Activated naive CD4-positive, alpha-beta T cell treated with anti-CD3 and anti-CD28 coated beads for 36 hours (primary cell): ENCODE measurements at regions of chr4 and their contacts with region 1.

Region 1: DNA sequence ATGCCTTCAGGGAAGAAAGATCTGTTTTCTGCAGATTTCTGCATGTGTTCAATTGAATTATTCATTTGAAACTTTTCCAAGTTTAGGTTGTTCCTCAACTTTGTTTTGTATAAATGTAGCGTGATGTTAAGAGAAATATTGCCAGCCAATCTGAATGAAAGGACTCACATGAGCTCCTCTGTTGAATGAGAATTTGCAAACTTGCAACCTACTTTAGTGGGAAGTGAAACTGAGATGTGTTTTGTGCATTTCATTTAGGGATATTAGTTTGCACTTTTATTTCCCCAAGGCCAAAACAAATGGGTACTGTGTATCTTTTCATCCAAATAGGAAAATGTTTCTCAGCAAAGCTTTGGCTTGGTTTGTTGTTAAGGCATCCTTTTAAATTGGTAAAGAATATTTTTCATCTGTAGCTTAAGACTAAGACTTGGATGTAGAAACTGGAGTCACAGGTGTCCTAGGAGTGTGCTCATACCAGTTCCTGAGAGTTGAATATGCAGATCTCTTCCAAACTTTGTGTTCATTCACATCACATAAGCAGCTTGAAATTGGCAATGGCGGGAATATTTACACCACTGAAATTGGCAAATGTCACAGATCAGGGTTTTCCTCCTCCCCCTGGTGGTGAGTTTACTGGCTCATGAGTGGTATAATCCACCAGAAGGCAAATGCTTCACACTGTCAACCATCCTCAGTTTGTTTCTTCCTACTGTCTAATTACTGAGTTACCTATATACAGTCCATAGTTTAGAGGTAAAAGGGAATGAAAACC is 193.6 kb upstream of the BANK1 start:
- DNase-seq: peak; percentile 33
- H3K4me3 Mint-ChIP-seq: no peak overlapping the region
- H3K27ac Mint-ChIP-seq: no peak overlapping the region
- H3K4me1 Mint-ChIP-seq: no peaks in the 10 kb centered on the region
- H3K27me3 Mint-ChIP-seq: peaks cover 1% of the 10 kb centered on the region

Region 2: GRCh38 chr4:101187841-101188240 is 409.1 kb before region 1 on chr4:
- CTCF ChIA-PET with region 1: no interaction called
- intact Hi-C with region 1: loop called (anchors 1 kb)
- DNase-seq: no peak
- H3K4me3 Mint-ChIP-seq: no peak overlapping the region
- H3K27ac Mint-ChIP-seq: no peak overlapping the region
- H3K4me1 Mint-ChIP-seq: peaks cover 6% of the 10 kb centered on the region
- H3K27me3 Mint-ChIP-seq: no peaks in the 10 kb centered on the region

Region 3: DNA sequence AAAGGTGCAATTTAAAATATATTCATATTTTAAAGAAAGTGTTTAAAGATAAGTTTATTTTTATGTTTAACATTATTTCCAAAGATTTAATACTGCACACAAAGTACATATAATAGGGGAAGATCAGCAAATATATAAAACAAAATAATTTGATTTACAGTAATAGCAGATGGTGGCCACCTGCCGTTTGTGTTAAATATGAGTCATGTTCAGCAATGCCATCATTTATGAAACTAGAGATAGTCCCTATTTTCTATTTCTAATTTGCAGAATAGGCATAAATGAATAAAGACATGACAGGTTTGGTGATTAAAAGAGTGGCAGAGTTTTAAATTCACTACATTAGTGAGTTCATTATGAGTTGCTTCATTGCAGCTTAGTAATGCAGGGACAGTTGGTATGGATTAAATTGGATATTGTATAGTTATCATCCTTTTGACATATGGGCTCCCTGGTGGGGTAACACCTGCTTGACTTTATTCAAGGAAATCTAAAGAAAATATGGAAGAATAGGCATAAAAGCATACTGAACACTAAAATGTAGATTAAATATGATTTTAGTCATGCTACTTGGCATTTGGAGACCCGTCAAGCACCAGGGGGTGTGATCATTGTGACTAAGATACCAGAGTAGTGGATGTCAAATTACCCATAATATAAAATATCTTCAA is 114.8 kb after region 1 on chr4:
- CTCF ChIA-PET with region 1: no interaction called
- intact Hi-C with region 1: no loop called
- DNase-seq: no peak
- H3K4me3 Mint-ChIP-seq: no peak overlapping the region
- H3K27ac Mint-ChIP-seq: no peak overlapping the region
- H3K4me1 Mint-ChIP-seq: no peaks in the 10 kb centered on the region
- H3K27me3 Mint-ChIP-seq: no peaks in the 10 kb centered on the region

Region 4: DNA sequence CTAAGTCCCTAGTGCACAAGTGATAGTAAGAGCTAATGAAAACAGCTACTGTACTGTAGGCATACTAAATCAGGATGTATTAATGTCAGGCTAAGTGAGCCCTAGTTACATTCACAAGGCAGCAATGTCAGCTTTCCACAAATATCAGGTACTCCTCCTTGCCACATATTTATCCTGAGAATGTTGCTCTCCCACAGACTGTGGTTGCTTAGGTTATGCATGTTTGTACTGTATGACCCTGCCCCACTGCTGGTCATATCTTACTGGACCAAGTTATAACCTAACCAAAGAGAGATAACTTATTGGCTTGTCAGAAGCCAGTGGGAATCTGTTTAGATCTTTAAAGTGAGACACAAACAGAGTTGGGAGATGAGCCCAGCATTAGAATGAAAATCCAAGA is 507.3 kb after region 1 on chr4:
- CTCF ChIA-PET with region 1: no interaction called
- intact Hi-C with region 1: no loop called
- DNase-seq: no peak
- H3K4me3 Mint-ChIP-seq: no peak overlapping the region
- H3K27ac Mint-ChIP-seq: no peak overlapping the region
- H3K4me1 Mint-ChIP-seq: no peaks in the 10 kb centered on the region
- H3K27me3 Mint-ChIP-seq: no peaks in the 10 kb centered on the region